HAP-1 (cell line): ENCODE measurements at regions of chr10 and their contacts with region 1.

Region 1: GRCh38 chr10:98467506-98468346 is 21.0 kb upstream of the HPS1 start:
- DNase-seq: peak; percentile 81 to 83
- H3K4me3 ChIP-seq: no peak overlapping the region
- H3K4me1 ChIP-seq: peaks cover 18% of the 10 kb centered on the region
- H3K27me3 ChIP-seq: no peaks in the 10 kb centered on the region; the same call in 1 of the 2 replicates

Region 2: DNA sequence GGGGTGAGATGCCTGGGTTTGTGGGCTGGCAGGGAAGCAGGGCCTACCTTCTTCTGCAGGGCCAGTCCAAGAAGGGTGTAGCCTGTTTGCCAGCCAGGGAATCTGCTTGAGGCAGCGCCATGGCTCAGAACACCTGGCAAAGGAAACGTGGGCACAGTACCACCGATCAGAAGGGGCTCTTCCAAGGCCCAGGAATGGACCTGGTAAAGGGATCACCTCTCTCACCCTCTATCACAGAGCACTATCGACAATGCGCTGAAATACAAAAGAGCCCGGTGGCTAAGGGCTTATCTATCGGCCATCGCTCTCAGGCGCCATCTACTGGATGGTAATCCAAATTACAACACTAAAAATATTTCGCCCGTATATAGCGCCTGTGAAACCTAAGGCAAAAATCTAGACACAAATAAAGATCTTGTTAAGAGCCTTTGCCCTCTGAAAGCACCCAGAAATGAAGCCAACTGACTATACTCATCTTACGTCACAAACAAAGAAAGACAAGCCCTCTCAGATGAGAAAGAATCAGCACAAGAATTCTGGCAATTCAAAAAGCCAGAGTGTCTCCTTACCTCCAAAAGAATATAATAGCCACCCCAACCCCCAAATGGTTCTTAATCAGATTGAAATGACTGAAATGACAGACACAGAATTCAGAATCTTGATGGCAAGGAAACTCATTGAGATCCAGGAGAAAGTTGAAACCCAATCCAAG is 196.8 kb after region 1 on chr10:
- in situ Hi-C with region 1: loop called (anchors 5 kb)
- DNase-seq: peak; percentile 51 to 63
- H3K4me3 ChIP-seq: no peak overlapping the region
- H3K4me1 ChIP-seq: no peaks in the 10 kb centered on the region
- H3K27me3 ChIP-seq: no peaks in the 10 kb centered on the region; the same call in 1 of the 2 replicates

Region 3: DNA sequence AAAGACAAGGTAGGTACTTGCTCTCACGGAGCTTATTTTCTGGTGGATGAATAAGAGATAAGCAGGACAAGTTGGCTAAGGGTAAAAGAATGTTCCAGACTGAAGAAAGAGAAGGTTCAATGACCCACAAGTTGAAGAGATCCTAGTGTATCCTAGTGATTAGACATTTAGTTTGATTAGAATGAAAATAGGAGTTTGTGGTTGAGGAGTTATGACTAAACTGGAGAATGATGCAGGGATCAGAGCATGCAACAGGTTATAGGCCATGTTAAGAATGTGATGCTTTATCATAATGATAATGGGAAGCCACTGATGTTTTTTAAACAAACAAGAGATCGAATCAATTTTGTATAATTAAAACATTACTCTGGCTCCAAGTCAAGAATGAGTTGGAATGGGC is 410.7 kb after region 1 on chr10:
- in situ Hi-C with region 1: no loop called
- DNase-seq: no peak
- H3K4me3 ChIP-seq: no peak overlapping the region
- H3K4me1 ChIP-seq: no peaks in the 10 kb centered on the region
- H3K27me3 ChIP-seq: no peaks in the 10 kb centered on the region

Region 4: DNA sequence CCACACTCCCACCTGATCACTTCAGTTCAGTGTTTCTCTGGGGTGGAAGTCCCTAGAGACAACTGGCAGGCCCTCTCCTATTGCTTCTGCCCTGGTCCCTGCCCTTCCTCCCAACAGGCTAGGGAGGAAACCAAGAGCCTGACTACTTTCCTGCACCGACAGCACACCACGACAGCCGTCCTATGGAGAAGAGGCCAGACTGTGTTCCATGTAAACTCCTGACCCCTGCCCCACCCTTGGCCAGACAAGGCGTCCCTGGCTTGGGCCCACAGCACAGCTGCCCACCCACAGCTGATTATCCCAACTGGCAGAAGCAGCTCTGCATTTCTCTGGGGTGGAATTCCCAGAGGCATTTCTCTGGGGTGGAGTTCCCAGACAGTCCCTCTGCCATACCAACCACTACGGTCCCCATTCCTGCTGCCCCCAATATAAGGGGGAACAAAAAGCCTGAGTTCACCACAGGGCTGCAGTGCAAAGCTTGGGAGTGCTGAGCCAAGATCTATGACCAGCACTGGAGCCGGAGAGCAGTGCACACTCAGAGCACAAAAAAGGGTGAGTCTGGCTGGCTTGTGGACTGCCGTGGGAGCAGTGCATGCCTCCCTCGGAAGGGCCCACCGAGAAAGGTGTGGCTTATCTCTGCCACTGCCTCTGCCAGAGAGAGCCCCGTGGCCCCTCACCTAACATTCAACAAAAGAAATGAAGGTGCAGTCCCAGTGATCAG is 574.5 kb after region 1 on chr10:
- in situ Hi-C with region 1: loop called (anchors 5 kb)
- DNase-seq: no peak
- H3K4me3 ChIP-seq: no peak overlapping the region
- H3K4me1 ChIP-seq: no peaks in the 10 kb centered on the region
- H3K27me3 ChIP-seq: 0 out of 2 replicates have a peak, but pooled peaks cover 4% of the 10 kb centered on the region

Region 5: GRCh38 chr10:99266387-99266786 is 798.7 kb after region 1 on chr10:
- in situ Hi-C with region 1: loop called (anchors 25 kb)
- DNase-seq: peak; percentile 91 to 96
- H3K4me3 ChIP-seq: peak overlapping the region; percentile 2; the same call in 1 of the 2 replicates
- H3K4me1 ChIP-seq: peaks cover 17% of the 10 kb centered on the region
- H3K27me3 ChIP-seq: no peaks in the 10 kb centered on the region; the same call in 1 of the 2 replicates